ENCODE measurements at regions of chr2 and their contacts with region 1.

Region 1: DNA sequence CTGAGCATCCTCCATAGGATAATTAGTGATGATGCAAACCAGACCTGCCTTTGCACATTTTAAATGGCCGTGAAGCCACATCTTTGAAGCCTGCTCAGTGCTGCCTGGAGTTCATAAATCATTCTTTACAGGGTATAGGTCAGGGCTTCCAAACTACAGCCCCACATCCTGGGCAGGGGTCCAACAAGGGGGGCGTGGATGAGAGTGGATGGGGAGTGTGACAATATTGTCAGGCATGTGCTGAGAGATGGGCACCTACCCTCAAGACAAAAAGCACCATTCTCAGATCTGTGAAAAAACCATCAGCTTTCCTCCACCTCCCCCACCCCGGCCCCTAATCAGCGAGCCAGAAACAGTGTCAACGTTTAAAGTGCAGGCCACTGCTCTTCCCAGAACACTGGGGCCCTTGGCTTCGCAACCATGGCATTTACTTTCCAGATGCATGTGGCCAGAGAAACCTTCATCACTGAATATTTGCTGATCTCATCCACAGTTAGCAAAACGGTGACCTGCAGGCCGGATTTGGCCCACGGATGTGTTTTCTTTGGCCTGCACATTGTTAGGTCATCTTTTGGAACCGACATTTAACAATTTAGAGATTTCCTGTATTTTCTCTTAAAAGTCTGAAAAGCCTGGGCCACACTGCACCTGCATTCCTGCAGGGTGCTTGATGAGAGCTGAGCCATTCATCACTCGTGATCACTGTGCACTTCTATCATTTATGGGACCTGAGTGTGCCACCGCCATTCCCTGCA is 130.7 kb downstream of the ANKRD44 start:
- DNase-seq: no peak
- H3K4me3 ChIP-seq: no peak overlapping the region
- CTCF ChIP-seq: no peak

Region 2: DNA sequence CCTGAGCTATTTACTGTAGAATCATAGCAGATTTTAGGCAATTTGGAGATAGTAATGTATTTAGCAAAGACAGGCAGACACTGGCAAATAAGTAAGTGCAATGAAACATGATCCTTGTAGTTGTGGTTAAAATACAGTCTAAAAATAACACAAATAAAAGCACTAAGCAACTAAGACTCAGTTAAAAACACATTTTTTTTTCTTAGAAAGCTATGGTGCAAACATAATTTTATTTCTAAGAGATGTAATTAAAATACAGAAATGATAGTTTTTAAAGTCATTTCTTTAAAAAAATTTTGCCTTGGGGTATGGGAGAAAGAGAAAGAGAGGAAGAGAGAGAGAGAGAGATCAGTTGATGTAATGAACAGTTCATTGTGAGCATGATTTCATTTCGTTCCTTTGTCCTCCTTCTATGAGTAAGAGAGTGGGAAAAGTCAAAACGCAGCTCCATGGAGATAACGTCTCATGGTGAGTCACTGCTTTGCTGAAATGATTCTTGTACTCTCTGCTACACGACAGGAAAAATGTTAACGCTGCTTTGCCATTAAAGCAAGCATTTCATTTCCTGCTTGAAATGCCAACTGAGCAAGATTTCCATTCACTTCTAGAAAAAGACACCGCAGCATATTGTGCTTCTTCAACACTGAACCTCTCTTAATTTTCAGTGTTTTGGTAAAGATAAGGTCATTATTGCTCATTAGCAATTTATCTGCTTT is 192.1 kb before region 1 on chr2:
- CTCF ChIA-PET with region 1: no interaction called
- POLR2A ChIA-PET with region 1: no interaction called
- DNase-seq: peak; percentile 83
- H3K4me3 ChIP-seq: peak overlapping the region; percentile 2; the same call in 1 of the 2 replicates
- CTCF ChIP-seq: no peak

Region 3: GRCh38 chr2:197168705-197169104 is 11.2 kb before region 1 on chr2:
- CTCF ChIA-PET with region 1: interaction called, 18 read pairs
- POLR2A ChIA-PET with region 1: no interaction called
- DNase-seq: no peak
- H3K4me3 ChIP-seq: no peak overlapping the region
- CTCF ChIP-seq: peak; percentile 59

Region 4: DNA sequence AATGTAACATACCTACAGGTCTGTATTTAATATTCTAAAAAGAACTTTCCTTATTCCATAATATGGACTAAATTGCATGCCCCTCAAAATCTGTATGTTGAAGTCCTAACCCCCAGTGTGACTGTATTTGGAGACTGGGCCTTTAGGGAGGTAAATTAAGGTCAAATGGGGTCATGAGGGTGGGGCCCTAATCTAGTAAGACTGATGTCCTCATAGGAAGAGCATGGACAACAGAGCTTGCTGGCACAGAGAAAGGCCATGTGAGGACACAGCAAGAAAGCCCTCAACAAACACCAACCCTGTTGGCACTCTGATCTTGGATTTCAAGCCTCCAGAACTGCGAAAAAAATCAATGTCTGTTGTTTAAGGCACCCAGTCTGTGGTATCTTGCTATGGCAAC is 236.3 kb after region 1 on chr2:
- CTCF ChIA-PET with region 1: no interaction called
- POLR2A ChIA-PET with region 1: no interaction called
- DNase-seq: no peak
- H3K4me3 ChIP-seq: no peak overlapping the region
- CTCF ChIP-seq: no peak

Measured in AG04449 (cell line).